ENCODE measurements at regions of chr2 and their contacts with region 1.

Region 1: DNA sequence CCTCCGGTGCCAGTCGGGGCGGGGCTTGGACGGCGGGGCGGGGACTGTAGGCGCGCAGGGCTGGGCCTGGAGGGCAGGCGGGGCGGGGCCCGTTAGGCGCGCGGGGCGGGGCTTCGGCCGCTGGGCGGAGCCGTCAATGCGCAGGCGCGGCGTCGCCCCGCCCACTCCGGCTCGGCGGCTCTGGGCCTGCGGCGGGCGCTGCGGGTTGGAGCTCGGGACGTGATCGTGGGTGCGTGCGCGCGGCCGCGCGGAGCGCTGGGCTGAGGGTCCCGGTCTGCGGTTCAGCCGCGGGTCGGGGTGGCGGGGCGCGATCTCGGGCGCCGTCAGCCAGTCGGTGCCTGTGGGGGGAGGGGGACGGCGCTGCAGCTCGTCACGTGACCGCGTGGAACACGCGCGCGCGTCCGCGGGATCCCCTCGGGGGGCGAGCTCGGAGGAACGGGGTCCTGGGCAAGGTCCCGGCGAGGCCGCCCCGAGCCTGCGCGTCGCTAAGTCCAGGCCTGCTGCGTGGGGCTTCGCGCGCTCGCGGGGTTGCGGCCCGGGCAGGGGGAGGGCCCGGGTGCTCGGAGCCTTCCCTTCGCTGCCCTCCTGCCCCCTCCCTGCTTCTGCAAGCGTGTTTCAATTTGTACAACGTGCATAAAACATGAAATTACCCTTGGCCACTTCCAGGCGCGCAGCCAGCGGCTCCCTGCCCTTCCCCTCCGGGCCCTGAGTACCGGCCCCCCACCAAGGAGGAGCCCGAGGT is at the start of gene D2HGDH:
- DNase-seq: peak; percentile 97
- H3K4me3 ChIP-seq: peak within 1 kb of the TSS; percentile 96
- H3K27ac ChIP-seq: peak within 1 kb of the TSS; percentile 98
- H3K4me1 ChIP-seq: peaks cover 6% of the 10 kb centered on the region
- H3K27me3 ChIP-seq: no peaks in the 10 kb centered on the region
- CTCF ChIP-seq: no peak
- total RNA-seq, gene D2HGDH: 42.0 to 76.6 TPM

Region 2: GRCh38 chr2:240819858-240820606 is 914.6 kb before region 1 on chr2 and contains the start of gene KIF1A:
- intact Hi-C with region 1: no loop called
- DNase-seq: no peak
- H3K4me3 ChIP-seq: no peak within 1 kb of the TSS
- H3K27ac ChIP-seq: no peak within 1 kb of the TSS
- H3K4me1 ChIP-seq: no peaks in the 10 kb centered on the region
- H3K27me3 ChIP-seq: peaks cover 54% of the 10 kb centered on the region
- CTCF ChIP-seq: no peak
- total RNA-seq, gene KIF1A: 1.9 to 4.3 TPM

Region 3: GRCh38 chr2:240832205-240832727 is 902.4 kb before region 1 on chr2:
- intact Hi-C with region 1: no loop called
- DNase-seq: peak; percentile 95
- H3K4me3 ChIP-seq: no peak overlapping the region
- H3K27ac ChIP-seq: no peak overlapping the region
- H3K4me1 ChIP-seq: no peaks in the 10 kb centered on the region
- H3K27me3 ChIP-seq: peaks cover 14% of the 10 kb centered on the region
- CTCF ChIP-seq: no peak

Region 4: DNA sequence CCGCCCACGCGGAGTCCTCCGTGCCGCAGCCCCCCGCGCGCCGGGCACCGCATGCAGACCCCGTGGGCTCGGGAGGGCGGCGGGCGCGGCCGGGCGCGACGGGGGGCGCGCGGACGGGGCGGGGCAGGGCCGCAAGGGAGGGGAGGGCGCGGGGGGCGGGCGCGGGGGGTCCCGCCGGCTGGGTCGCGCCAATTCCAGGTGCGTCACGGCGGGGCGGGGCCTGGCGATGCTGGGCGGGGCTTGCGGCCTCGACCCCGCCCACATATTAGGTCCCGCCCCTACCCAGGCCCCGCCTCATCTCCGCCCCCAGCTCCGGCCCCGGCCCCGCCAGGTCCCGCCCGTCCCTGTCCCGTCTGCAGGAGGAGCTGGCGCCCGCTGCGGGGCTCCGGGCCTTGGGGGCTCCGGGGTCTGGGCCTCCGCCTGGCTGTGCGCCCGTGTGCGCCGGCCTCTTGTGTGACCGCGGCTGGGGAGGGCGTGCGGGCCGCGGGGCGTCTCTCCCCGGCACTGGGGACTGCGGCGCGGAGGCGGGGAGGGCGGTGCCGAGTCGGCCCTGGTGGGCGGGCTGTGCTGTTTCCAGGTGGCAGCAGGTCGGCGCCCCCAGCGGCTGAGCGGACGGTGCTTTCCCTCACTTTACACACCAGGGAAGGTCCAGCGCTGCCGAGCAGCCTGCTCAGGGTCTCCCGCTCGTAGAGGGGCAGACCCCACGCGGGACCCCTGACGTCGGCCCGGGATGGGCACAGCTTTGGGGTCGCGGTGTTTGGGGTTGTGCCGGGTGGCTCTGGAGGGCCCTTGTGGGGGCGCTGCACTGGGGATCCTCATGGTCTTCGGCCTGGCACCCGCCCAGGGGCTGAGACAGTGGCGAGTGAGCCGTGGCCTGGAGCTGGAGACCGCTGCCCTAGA is 32.3 kb before region 1 on chr2:
- intact Hi-C with region 1: loop called (anchors 2 kb)
- DNase-seq: peak; percentile 84
- H3K4me3 ChIP-seq: peak overlapping the region; percentile 98
- H3K27ac ChIP-seq: peak overlapping the region; percentile 80
- H3K4me1 ChIP-seq: peaks cover 12% of the 10 kb centered on the region
- H3K27me3 ChIP-seq: no peaks in the 10 kb centered on the region
- CTCF ChIP-seq: peak; percentile 39

Region 5: GRCh38 chr2:241774646-241775222 is 40.1 kb after region 1 on chr2:
- intact Hi-C with region 1: no loop called
- DNase-seq: peak; percentile 88
- H3K4me3 ChIP-seq: peak overlapping the region; percentile 41
- H3K27ac ChIP-seq: peak overlapping the region; percentile 82
- H3K4me1 ChIP-seq: no peaks in the 10 kb centered on the region
- H3K27me3 ChIP-seq: no peaks in the 10 kb centered on the region
- CTCF ChIP-seq: no peak